Breast epithelium (tissue), 4 donors: ENCODE measurements at regions of chr14 and their contacts with region 1.

Region 1: DNA sequence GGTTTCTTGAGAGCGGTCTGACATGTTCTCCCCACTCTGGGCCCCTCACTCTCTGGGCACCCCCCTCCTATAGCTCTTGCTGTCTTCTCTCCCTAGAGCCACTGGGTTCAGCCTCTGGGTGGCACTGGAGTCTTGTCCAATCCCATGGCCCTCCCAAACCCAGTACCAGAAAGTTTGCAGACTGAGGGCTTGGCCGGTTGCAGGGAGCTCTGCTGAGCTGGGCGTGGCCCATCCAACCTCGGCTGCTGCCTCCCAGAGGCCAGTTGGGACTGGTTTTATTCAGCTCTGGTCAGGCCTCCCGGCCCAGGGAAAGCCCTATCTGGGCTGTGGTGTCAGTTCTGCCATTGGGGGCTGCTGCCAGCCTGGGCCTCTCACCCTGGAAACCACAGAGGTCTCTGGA is 37.9 kb downstream of the ISCA2 start:
- DNase-seq: no peak
- H3K4me3 ChIP-seq: no peak overlapping the region
- H3K27ac ChIP-seq: peak overlapping the region in 1 of 2 donors; percentile 25
- H3K4me1 ChIP-seq: peaks cover 0 to under 1% of the 10 kb centered on the region in 2 donors
- H3K27me3 ChIP-seq: no peaks in the 10 kb centered on the region
- CTCF ChIP-seq: no peak
- POLR2A ChIP-seq: no peak

Region 2: GRCh38 chr14:76331037-76332011 is 1799.9 kb after region 1 on chr14:
- intact Hi-C with region 1: loop called (anchors 5 kb)
- DNase-seq: no peak
- H3K4me3 ChIP-seq: no peak overlapping the region
- H3K27ac ChIP-seq: no peak overlapping the region
- H3K4me1 ChIP-seq: no peaks in the 10 kb centered on the region
- H3K27me3 ChIP-seq: peaks cover 0 to 23% of the 10 kb centered on the region in 2 donors
- CTCF ChIP-seq: no peak
- POLR2A ChIP-seq: no peak